AG04450 (cell line): ENCODE measurements at regions of chr6 and their contacts with region 1.

Region 1: DNA sequence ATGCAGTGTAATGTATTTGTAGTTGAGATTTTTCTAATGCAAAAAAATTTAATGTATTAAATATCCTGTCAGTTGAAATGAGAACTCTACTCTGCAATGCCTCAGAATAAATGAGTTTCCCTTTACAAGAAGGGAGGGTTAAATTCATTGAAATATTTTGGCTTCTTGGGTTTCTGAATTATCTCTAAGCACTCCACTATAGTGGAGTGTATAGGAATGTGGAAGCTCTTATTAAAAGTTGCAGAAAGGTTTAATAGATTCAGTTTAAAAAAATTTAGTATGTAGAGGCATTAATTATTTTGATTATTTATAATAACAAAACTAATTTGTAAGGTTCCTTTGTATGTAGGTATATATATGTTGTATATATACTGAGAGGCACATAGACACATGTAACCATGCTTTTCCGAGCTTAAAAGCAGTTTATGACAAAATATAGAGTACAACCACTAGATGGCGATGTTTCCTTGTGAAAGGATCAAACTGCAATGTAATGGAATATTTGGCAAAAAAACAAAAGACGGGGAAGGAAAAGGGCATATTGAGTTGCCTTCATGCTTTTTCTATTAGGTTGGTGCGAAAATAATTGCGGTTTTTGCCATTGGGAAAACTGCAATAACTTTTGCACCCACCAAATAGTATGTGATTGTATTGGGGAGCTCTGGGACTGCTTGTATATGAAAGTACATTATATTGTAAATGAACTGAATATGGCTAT is 144.2 kb downstream of the MYO6 start:
- DNase-seq: peak; percentile 60
- H3K4me3 ChIP-seq: no peak overlapping the region
- H3K27ac ChIP-seq: no peak overlapping the region
- H3K27me3 ChIP-seq: no peaks in the 10 kb centered on the region
- CTCF ChIP-seq: peak; percentile 71

Region 2: GRCh38 chr6:75412969-75413662 is 480.1 kb before region 1 on chr6:
- CTCF ChIA-PET with region 1: no interaction called
- POLR2A ChIA-PET with region 1: no interaction called
- DNase-seq: peak; percentile 59
- H3K4me3 ChIP-seq: no peak overlapping the region
- H3K27ac ChIP-seq: no peak overlapping the region
- H3K27me3 ChIP-seq: no peaks in the 10 kb centered on the region
- CTCF ChIP-seq: no peak

Region 3: GRCh38 chr6:75656479-75656878 is 236.7 kb before region 1 on chr6:
- CTCF ChIA-PET with region 1: no interaction called
- POLR2A ChIA-PET with region 1: no interaction called
- DNase-seq: no peak
- H3K4me3 ChIP-seq: no peak overlapping the region
- H3K27ac ChIP-seq: no peak overlapping the region
- H3K27me3 ChIP-seq: no peaks in the 10 kb centered on the region
- CTCF ChIP-seq: no peak

Region 4: GRCh38 chr6:75855052-75855451 is 38.2 kb before region 1 on chr6:
- CTCF ChIA-PET with region 1: interaction called, 31 read pairs
- POLR2A ChIA-PET with region 1: no interaction called
- DNase-seq: peak; percentile 45
- H3K4me3 ChIP-seq: no peak overlapping the region
- H3K27ac ChIP-seq: no peak overlapping the region
- H3K27me3 ChIP-seq: no peaks in the 10 kb centered on the region
- CTCF ChIP-seq: peak; percentile 69

Region 5: DNA sequence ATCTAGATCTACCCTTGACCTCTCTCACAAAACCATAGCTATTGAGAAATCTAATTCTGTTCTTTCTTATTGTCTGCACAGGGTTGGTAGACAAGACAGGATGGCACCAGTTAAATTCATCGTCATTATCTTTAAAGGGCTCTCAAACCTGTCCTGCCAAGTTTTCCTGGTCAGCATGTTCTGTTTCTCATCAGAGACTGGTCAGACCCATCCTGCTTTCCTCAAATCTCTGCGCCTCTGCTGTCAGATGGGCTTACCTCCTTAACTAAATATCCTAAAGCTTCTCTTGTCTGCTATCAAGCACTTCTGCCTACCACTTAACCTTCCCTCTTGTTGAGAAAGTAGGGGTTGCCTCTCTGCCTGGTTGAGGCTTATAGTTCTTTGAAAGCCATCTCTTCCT is 19.0 kb before region 1 on chr6:
- CTCF ChIA-PET with region 1: interaction called, 87 read pairs
- POLR2A ChIA-PET with region 1: no interaction called
- DNase-seq: no peak
- H3K4me3 ChIP-seq: no peak overlapping the region
- H3K27ac ChIP-seq: no peak overlapping the region
- H3K27me3 ChIP-seq: no peaks in the 10 kb centered on the region
- CTCF ChIP-seq: no peak

Region 6: DNA sequence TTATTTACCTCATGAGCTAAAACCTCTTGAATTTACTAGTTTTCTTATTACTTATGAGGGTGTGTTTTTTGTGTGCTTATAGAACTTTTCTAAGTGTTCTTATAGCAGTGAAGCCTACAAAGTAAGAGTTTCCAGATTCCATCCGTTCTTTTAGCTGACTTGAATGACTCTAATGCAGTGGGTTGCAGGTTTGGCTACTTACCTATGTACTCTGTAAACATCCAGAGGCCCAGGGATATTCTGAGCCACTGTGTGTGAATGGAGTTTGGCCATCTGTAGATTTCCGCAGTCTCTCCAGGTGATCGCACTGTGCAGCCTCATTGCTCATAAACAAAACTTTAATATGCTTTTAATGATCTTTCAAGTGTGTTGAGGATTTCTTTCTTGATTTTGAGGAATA is 13.7 kb after region 1 on chr6:
- CTCF ChIA-PET with region 1: interaction called, 57 read pairs
- POLR2A ChIA-PET with region 1: no interaction called
- DNase-seq: no peak
- H3K4me3 ChIP-seq: no peak overlapping the region
- H3K27ac ChIP-seq: no peak overlapping the region
- H3K27me3 ChIP-seq: no peaks in the 10 kb centered on the region
- CTCF ChIP-seq: no peak

Region 7: GRCh38 chr6:75922226-75922625 is 29.0 kb after region 1 on chr6:
- CTCF ChIA-PET with region 1: interaction called, 21 read pairs
- POLR2A ChIA-PET with region 1: no interaction called
- DNase-seq: no peak
- H3K4me3 ChIP-seq: no peak overlapping the region
- H3K27ac ChIP-seq: no peak overlapping the region
- H3K27me3 ChIP-seq: no peaks in the 10 kb centered on the region
- CTCF ChIP-seq: no peak

Region 8: GRCh38 chr6:76682842-76683241 is 789.6 kb after region 1 on chr6:
- CTCF ChIA-PET with region 1: interaction called, 10 read pairs
- POLR2A ChIA-PET with region 1: no interaction called
- DNase-seq: no peak
- H3K4me3 ChIP-seq: no peak overlapping the region
- H3K27ac ChIP-seq: no peak overlapping the region
- H3K27me3 ChIP-seq: no peaks in the 10 kb centered on the region
- CTCF ChIP-seq: peak; percentile 38

Region 9: GRCh38 chr6:77466055-77466450 is 1572.8 kb after region 1 on chr6:
- CTCF ChIA-PET with region 1: interaction called, 17 read pairs
- POLR2A ChIA-PET with region 1: no interaction called
- DNase-seq: peak; percentile 51
- H3K4me3 ChIP-seq: peak overlapping the region; percentile 73
- H3K27ac ChIP-seq: peak overlapping the region; percentile 53
- H3K27me3 ChIP-seq: peaks cover 16% of the 10 kb centered on the region
- CTCF ChIP-seq: peak; percentile 94